B cell (primary cell): ENCODE measurements at regions of chr17 and their contacts with region 1.

Region 1: GRCh38 chr17:77404812-77405581 is 264.2 kb downstream of the SEC14L1 start:
- DNase-seq: peak; percentile 83
- ATAC-seq: peak; percentile 73
- H3K4me3 ChIP-seq: peak overlapping the region; percentile 57 to 72 (median 63)
- H3K4me3 Mint-ChIP-seq: peak overlapping the region; percentile 93
- H3K27ac ChIP-seq: peak overlapping the region; percentile 84 to 90
- H3K27ac Mint-ChIP-seq: peak overlapping the region; percentile 95
- H3K4me1 ChIP-seq: peaks cover 86 to 100% of the 10 kb centered on the region in 2 donors
- H3K4me1 Mint-ChIP-seq: peaks cover 88% of the 10 kb centered on the region
- H3K27me3 ChIP-seq: no peaks in the 10 kb centered on the region
- H3K27me3 Mint-ChIP-seq: no peaks in the 10 kb centered on the region
- CTCF ChIP-seq: no peak

Region 2: DNA sequence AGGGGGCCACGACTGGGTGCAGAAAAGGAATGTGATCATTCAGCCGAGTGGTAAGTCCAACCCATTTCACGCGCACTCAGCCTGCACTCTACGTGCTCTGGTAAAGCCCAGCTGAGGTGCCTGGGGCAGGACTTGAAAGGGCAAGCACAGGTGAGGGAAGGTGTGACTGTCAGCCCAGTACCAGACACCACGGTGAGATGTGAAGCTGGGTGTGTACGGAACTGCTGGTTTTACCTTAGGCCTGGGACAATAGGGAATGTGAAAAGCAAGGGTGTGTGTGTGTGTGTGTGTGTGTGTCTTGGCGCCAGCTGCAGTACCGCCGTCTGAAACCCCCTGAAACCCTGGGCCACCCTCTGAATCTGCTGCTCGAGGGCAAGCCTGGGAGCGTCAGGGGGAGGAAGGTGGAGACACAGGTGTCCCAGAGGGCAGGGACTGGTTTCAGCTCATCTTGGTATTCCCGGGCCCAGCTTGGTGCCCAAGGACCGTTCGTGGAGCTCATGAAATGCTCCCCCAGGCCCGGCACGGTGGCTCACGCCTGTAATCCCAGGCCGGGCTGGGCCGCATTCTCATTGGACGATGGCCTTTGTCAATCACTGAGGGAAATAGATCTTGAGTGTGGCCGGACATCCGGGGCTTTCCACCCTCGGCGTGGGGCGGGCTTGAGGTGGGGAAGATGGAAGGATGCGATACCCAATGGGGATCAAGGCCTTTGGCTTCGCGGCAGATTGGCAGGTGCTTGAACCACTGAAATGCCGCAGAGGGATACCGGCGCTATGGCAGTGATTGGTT is 733.7 kb before region 1 on chr17:
- CTCF ChIA-PET with region 1: no interaction called
- POLR2A ChIA-PET with region 1: no interaction called
- intact Hi-C with region 1: no loop called
- DNase-seq: peak; percentile 99
- ATAC-seq: peak; percentile 99
- H3K4me3 ChIP-seq: peak overlapping the region; percentile 66 to 92 (median 84)
- H3K4me3 Mint-ChIP-seq: peak overlapping the region; percentile 92
- H3K27ac ChIP-seq: peak overlapping the region; percentile 80 to 81
- H3K27ac Mint-ChIP-seq: peak overlapping the region; percentile 93
- H3K4me1 ChIP-seq: peaks cover 10 to 18% of the 10 kb centered on the region in 2 donors
- H3K4me1 Mint-ChIP-seq: peaks cover 25% of the 10 kb centered on the region
- H3K27me3 ChIP-seq: peaks cover 0 to 3% (median 1%) of the 10 kb centered on the region in 4 experiments
- H3K27me3 Mint-ChIP-seq: peaks cover 13% of the 10 kb centered on the region
- CTCF ChIP-seq: no peak

Region 3: DNA sequence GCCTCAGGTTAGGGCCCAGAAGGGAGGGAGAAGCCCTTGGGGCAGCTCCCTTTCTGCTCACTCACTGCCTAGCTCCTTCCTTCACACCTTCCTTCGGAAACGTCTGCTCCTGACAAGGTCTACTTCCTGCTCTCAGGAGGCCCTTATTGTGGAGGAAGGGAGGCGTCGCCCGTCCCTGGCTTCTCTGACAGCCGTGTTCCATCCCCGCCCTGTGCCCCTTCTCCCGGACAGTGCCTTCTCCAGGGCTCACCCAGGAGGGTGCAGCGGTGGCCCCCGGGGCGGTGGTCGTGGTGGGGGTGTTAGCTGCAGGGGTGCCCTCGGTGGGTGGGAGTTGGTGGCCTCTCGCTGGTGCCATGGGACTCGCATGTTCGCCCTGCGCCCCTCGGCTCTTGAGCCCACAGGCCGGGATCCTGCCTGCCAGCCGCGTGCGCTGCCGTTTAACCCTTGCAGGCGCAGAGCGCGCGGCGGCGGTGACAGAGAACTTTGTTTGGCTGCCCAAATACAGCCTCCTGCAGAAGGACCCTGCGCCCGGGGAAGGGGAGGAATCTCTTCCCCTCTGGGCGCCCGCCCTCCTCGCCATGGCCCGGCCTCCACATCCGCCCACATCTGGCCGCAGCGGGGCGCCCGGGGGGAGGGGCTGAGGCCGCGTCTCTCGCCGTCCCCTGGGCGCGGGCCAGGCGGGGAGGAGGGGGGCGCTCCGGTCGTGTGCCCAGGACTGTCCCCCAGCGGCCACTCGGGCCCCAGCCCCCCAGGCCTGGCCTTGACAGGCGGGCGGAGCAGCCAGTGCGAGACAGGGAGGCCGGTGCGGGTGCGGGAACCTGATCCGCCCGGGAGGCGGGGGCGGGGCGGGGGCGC is 32.3 kb before region 1 on chr17:
- CTCF ChIA-PET with region 1: interaction called, 11 read pairs
- POLR2A ChIA-PET with region 1: interaction called, 3 read pairs
- intact Hi-C with region 1: loop called (anchors 1 kb)
- DNase-seq: peak; percentile 74
- ATAC-seq: peak; percentile 64
- H3K4me3 ChIP-seq: peak overlapping the region; percentile 9 to 91 (median 79)
- H3K4me3 Mint-ChIP-seq: peak overlapping the region; percentile 74
- H3K27ac ChIP-seq: no peak overlapping the region
- H3K27ac Mint-ChIP-seq: peak overlapping the region; percentile 32
- H3K4me1 ChIP-seq: peaks cover 28 to 48% of the 10 kb centered on the region in 2 donors
- H3K4me1 Mint-ChIP-seq: peaks cover 36% of the 10 kb centered on the region
- H3K27me3 ChIP-seq: no peaks in the 10 kb centered on the region
- H3K27me3 Mint-ChIP-seq: no peaks in the 10 kb centered on the region
- CTCF ChIP-seq: no peak

Region 4: GRCh38 chr17:77420804-77421629 is 16.0 kb after region 1 on chr17:
- CTCF ChIA-PET with region 1: interaction called, 699 read pairs
- POLR2A ChIA-PET with region 1: interaction called, 47 read pairs
- intact Hi-C with region 1: loop called (anchors 2 kb)
- DNase-seq: peak; percentile 57
- ATAC-seq: peak; percentile 46
- H3K4me3 ChIP-seq: peak overlapping the region in 4 of 5 experiments; percentile 13 to 40 (median 24)
- H3K4me3 Mint-ChIP-seq: peak overlapping the region; percentile 82
- H3K27ac ChIP-seq: peak overlapping the region; percentile 25 to 27
- H3K27ac Mint-ChIP-seq: peak overlapping the region; percentile 72
- H3K4me1 ChIP-seq: peaks cover 28 to 49% of the 10 kb centered on the region in 2 donors
- H3K4me1 Mint-ChIP-seq: peaks cover 31% of the 10 kb centered on the region
- H3K27me3 ChIP-seq: no peaks in the 10 kb centered on the region
- H3K27me3 Mint-ChIP-seq: no peaks in the 10 kb centered on the region
- CTCF ChIP-seq: no peak

Region 5: DNA sequence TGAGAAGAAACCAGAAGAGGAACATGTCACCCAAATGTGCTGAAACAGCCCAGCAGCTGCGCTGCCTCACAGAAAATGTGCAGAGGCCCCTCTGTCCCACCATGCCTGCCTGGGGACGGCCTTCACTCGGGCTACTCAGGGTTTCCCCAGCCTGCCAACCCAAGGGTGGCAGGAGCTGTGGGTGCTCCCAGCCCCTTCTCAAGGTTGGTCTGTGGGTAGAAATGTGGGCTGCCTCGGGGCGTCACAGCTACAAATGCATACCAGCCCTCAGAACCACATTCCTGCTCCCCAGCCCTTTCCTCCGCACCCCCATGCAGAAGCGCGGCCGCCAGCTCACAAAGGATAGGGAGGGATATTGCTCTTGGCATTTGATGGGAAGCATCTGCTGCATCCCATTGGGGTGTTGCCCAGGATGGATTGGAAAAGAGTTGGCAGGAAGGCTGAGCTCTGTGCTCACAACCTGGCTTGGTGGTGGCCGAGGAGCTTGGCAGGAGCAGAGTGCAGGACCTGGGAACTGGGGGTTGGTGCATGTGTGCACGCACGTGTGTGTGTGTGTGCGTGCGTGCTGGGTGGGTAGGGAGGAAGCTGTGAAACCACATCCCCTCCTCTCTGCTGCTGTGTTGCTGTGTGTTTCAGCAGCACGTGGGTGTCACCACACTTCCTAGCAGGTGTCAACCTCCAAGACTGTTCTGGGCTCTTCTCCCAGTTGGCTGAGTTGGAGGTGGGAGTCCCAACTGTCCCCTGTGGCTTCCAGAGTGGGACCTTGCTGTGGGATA is 40.2 kb after region 1 on chr17:
- CTCF ChIA-PET with region 1: interaction called, 699 read pairs
- POLR2A ChIA-PET with region 1: interaction called, 51 read pairs
- intact Hi-C with region 1: loop called (anchors 1 kb)
- DNase-seq: peak; percentile 95
- ATAC-seq: peak; percentile 50
- H3K4me3 ChIP-seq: peak overlapping the region in 4 of 5 experiments; percentile 32 to 54 (median 49)
- H3K4me3 Mint-ChIP-seq: peak overlapping the region; percentile 79
- H3K27ac ChIP-seq: peak overlapping the region; percentile 96 to 100
- H3K27ac Mint-ChIP-seq: peak overlapping the region; percentile 98
- H3K4me1 ChIP-seq: peaks cover 89 to 100% of the 10 kb centered on the region in 2 donors
- H3K4me1 Mint-ChIP-seq: peaks cover 87% of the 10 kb centered on the region
- H3K27me3 ChIP-seq: no peaks in the 10 kb centered on the region
- H3K27me3 Mint-ChIP-seq: no peaks in the 10 kb centered on the region
- CTCF ChIP-seq: no peak

Region 6: GRCh38 chr17:77465358-77466041 is 60.5 kb after region 1 on chr17:
- CTCF ChIA-PET with region 1: interaction called, 22 read pairs
- POLR2A ChIA-PET with region 1: interaction called, 19 read pairs
- intact Hi-C with region 1: loop called (anchors 1 kb)
- DNase-seq: peak; percentile 94
- ATAC-seq: peak; percentile 78
- H3K4me3 ChIP-seq: peak overlapping the region; percentile 12 to 56 (median 38)
- H3K4me3 Mint-ChIP-seq: peak overlapping the region; percentile 81
- H3K27ac ChIP-seq: peak overlapping the region; percentile 55 to 89
- H3K27ac Mint-ChIP-seq: peak overlapping the region; percentile 95
- H3K4me1 ChIP-seq: peaks cover 90 to 98% of the 10 kb centered on the region in 2 donors
- H3K4me1 Mint-ChIP-seq: peaks cover 86% of the 10 kb centered on the region
- H3K27me3 ChIP-seq: no peaks in the 10 kb centered on the region
- H3K27me3 Mint-ChIP-seq: no peaks in the 10 kb centered on the region
- CTCF ChIP-seq: no peak

Region 7: DNA sequence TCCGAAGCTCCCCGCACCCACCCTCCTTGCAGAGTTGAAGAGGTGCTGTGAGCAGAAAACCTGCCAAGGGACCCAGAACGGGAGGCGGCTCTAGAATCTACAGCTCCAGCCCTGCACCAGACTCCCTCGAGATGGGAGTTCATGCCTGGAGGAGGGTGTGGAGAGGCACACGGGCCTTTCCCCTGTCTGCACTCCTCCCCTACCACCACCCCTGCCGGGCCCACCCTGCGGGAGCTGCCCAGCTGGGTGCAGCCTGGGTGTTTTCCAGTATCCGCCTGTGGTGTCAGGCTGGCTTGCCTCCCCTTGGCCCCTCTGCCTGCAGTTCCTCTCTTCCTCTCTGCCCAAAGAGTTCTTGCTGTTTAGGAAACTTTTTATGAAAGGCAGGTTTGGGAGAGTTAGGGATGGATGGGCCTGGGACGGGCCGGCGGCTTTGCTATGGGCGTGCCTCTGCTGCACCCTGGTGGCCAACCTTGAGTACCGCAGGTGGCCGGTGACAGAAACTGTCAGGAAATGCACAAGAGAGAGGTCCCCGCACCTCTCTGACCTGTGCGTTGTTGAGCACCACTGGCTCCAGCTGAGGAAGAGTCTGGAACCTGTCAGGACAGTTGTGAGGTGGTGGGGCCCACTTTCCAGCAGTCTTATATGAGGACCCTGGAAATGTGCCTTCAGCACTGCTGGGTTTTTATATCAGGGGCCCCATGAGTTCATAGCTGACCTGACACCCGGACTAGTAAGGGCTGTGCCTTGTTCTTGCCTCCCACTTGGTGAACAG is 89.9 kb after region 1 on chr17:
- CTCF ChIA-PET with region 1: interaction called, 135 read pairs
- POLR2A ChIA-PET with region 1: interaction called, 20 read pairs
- intact Hi-C with region 1: loop called (anchors 1 kb)
- DNase-seq: peak; percentile 86
- ATAC-seq: peak; percentile 74
- H3K4me3 ChIP-seq: no peak overlapping the region
- H3K4me3 Mint-ChIP-seq: peak overlapping the region; percentile 44
- H3K27ac ChIP-seq: peak overlapping the region; percentile 28
- H3K27ac Mint-ChIP-seq: peak overlapping the region; percentile 90
- H3K4me1 ChIP-seq: peaks cover 14 to 43% of the 10 kb centered on the region in 2 donors
- H3K4me1 Mint-ChIP-seq: peaks cover 32% of the 10 kb centered on the region
- H3K27me3 ChIP-seq: no peaks in the 10 kb centered on the region
- H3K27me3 Mint-ChIP-seq: no peaks in the 10 kb centered on the region
- CTCF ChIP-seq: peak; percentile 98

Region 8: DNA sequence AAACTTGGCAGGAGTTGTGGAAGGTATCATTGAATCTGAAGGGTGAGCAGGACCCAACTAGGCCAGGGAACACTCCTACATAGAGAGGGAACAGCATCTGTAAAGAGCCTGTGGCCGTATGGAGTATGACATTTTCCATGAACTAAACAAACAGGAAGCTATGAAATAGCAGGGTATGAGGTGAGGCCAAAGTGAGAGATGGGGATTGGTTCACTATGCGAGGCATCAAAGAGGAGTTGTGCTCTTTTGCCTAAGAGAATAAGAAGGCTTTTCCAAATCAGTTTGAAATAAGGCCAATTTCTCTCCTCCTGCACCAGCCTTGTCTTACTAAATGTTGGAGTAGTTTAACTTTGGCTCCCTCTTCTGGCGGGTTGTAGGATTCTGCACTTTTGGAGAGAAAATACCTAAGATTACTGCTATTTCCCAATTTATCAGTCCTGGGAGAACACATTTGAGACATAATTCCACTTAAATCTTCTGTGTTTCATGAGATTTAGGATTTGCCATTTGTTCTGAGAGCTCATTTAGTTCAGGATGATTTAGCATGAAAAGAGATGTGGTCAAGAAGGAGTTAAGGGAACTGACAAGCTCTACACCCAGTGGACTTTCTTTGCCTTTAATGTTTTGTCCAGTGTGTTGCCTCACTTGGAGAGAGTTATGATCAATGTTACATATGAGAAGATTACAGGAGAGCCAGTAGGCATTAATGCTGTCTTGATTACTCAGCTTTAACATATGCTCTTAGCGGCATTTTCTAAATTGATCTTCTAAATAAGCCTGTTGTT is 608.9 kb after region 1 on chr17:
- CTCF ChIA-PET with region 1: interaction called, 22 read pairs
- POLR2A ChIA-PET with region 1: no interaction called
- intact Hi-C with region 1: loop called (anchors 1 kb)
- DNase-seq: peak; percentile 80
- ATAC-seq: peak; percentile 56
- H3K4me3 ChIP-seq: no peak overlapping the region
- H3K4me3 Mint-ChIP-seq: no peak overlapping the region
- H3K27ac ChIP-seq: no peak overlapping the region
- H3K27ac Mint-ChIP-seq: no peak overlapping the region
- H3K4me1 ChIP-seq: no peaks in the 10 kb centered on the region
- H3K4me1 Mint-ChIP-seq: peaks cover 7% of the 10 kb centered on the region
- H3K27me3 ChIP-seq: no peaks in the 10 kb centered on the region
- H3K27me3 Mint-ChIP-seq: no peaks in the 10 kb centered on the region
- CTCF ChIP-seq: peak; percentile 91